Heart right ventricle (tissue), 16 donors: ENCODE measurements at regions of chr2 and their contacts with region 1.

Region 1: GRCh38 chr2:15912205-15912604 is 28.1 kb upstream of the MYCN start:
- DNase-seq: peak; percentile 63 to 76
- ATAC-seq: peak; percentile 34 to 92 (median 83)
- H3K4me3 ChIP-seq: peak overlapping the region in 1 of 10 donors; percentile 9
- H3K27ac ChIP-seq: peak overlapping the region in 4 of 10 donors; percentile 32 to 49 (median 40)
- H3K4me1 ChIP-seq: peaks cover 0 to 41% (median 23%) of the 10 kb centered on the region in 9 donors
- H3K27me3 ChIP-seq: no peaks in the 10 kb centered on the region
- CTCF ChIP-seq: no peak

Region 2: DNA sequence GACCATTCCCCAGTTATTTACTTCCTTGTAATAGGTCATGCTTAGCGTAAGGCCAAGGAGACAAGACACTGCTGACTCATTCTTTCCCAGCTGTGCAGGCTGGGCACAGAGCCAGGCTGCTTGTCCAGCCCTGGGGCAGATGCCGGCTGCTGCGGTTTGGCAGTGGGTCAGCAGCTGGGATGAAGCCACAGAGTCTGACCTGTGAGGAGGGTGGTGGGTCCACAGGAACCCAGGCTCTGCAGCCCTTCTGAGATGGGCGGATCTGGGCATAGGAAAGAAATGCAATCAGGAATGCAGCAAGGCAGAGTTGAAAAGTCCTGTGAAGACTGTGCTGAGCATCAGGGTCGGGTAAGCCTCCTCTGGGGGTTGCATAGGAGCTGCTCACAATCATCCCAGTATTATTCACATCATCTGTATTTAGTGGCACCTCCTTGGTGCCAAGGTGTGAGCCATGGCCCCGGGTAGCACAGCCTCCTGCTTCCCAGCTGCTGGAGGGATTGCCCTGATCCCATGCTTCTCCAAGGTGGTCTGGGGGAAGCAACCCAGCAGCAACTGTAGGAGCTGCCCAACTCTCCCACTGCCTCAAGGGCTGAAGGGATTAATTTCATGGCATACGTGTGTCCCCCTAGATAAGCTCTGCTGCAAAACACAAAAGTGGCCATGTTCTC is 181.5 kb before region 1 on chr2:
- intact Hi-C with region 1: loop called in 1 of 10 experiments (anchors 10 kb)
- DNase-seq: peak; percentile 94 to 95
- ATAC-seq: peak; percentile 86 to 96 (median 94)
- H3K4me3 ChIP-seq: no peak overlapping the region
- H3K27ac ChIP-seq: peak overlapping the region in 4 of 10 donors; percentile 6 to 77 (median 54)
- H3K4me1 ChIP-seq: peaks cover 26 to 59% (median 51%) of the 10 kb centered on the region in 9 donors
- H3K27me3 ChIP-seq: no peaks in the 10 kb centered on the region
- CTCF ChIP-seq: no peak

Region 3: DNA sequence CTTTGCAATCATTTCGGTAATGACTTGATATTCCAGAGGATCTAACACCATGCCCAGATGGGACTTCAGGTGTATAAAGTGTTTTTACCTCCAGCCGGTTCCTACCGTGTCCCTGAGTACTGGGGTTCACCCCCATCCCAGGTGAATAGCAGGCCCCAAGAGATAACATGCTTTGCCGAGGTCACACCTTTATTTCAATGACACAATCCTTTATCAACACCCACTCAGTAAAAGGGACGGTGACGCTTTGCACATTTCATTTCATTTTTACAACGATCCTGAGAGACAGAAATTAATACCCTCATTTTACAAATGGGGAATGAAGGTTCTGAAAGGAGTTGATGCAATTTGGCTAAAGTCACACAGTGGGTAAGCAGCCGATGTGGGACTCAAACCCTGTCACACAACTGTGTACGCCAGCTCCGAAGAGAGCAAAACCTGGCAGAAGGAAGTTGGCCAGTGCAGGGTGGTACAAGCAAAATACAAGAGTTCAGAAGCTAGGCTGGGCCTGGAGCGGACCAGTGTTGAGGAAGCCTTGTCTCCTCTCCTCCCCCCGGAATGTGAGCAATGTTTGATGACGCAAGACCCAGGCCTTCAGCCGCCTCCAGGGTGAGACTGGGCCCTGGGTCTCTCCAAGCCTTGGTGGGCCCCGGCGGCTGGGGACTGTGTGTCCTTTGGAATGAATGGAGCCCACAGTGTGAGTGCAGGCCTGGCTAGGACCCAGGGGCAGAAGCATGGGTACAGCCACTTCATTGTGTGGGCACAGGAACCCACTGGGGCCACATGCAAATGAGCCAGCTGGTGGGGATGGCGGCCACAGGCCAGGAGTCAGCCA is 111.5 kb before region 1 on chr2:
- intact Hi-C with region 1: loop called in 1 of 10 experiments (anchors 10 kb)
- DNase-seq: no peak
- ATAC-seq: peak in 2 of 8 donors; percentile 12 to 43
- H3K4me3 ChIP-seq: no peak overlapping the region
- H3K27ac ChIP-seq: no peak overlapping the region
- H3K4me1 ChIP-seq: peaks cover 0 to 27% (median 5%) of the 10 kb centered on the region in 9 donors
- H3K27me3 ChIP-seq: peaks cover 0 to under 1% (median 0%) of the 10 kb centered on the region in 7 donors
- CTCF ChIP-seq: no peak

Region 4: DNA sequence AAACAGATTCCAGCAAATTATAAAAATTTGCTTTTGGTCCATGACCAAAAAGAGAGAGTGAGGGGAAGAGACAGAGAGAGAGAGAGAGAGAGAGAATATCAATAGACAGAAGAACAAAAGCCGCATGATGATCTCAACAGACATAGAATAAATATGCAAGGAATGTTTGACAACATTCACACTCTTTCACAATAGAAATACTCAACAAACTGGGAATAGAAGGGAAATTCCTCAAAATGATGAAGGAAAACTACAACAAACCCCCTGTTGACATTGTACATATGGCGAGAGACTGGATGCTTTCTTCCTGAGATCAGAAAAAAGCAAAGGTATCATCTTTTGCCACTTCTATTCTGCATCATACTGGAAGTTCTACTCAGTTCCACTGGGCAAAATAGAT is 1296.3 kb after region 1 on chr2:
- intact Hi-C with region 1: loop called in 1 of 10 experiments (anchors 5 kb)
- DNase-seq: no peak
- ATAC-seq: no peak
- H3K4me3 ChIP-seq: no peak overlapping the region
- H3K27ac ChIP-seq: no peak overlapping the region
- H3K4me1 ChIP-seq: no peaks in the 10 kb centered on the region
- H3K27me3 ChIP-seq: no peaks in the 10 kb centered on the region
- CTCF ChIP-seq: no peak